Calu3 (cell line): ENCODE measurements at regions of chr1 and their contacts with region 1.

Region 1: DNA sequence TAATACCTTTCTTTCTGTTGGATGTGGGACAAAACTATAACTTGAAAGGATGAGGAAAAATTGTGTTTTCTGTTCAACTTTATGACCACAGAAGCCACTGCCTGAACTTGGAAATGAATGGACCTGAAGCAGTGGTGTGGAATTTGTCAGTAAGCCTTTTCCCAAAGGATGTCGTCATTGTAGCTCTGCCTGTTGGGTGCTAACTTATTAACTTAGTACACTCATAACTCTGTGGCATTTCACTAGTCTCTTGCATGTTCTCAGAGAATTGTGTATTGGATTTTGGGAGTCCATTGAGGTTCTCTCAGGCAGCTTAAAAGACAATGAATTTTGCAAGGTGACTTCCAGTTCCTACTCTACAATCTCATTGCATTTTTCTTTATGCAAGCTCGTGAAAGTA is 49.6 kb downstream of the KCNK2 start:
- DNase-seq: peak; percentile 18
- H3K4me3 Mint-ChIP-seq: no peak overlapping the region
- H3K27ac Mint-ChIP-seq: no peak overlapping the region
- H3K4me1 Mint-ChIP-seq: peaks cover 15% of the 10 kb centered on the region
- H3K27me3 Mint-ChIP-seq: no peaks in the 10 kb centered on the region
- CTCF ChIP-seq: no peak

Region 2: GRCh38 chr1:215114154-215114933 is 17.8 kb before region 1 on chr1:
- CTCF ChIA-PET with region 1: no interaction called
- intact Hi-C with region 1: loop called (anchors 2 kb)
- DNase-seq: peak; percentile 75
- H3K4me3 Mint-ChIP-seq: peak overlapping the region; percentile 13
- H3K27ac Mint-ChIP-seq: peak overlapping the region; percentile 91
- H3K4me1 Mint-ChIP-seq: peaks cover 28% of the 10 kb centered on the region
- H3K27me3 Mint-ChIP-seq: no peaks in the 10 kb centered on the region
- CTCF ChIP-seq: no peak